ENCODE measurements at regions of chr2 and their contacts with region 1.

Region 1: DNA sequence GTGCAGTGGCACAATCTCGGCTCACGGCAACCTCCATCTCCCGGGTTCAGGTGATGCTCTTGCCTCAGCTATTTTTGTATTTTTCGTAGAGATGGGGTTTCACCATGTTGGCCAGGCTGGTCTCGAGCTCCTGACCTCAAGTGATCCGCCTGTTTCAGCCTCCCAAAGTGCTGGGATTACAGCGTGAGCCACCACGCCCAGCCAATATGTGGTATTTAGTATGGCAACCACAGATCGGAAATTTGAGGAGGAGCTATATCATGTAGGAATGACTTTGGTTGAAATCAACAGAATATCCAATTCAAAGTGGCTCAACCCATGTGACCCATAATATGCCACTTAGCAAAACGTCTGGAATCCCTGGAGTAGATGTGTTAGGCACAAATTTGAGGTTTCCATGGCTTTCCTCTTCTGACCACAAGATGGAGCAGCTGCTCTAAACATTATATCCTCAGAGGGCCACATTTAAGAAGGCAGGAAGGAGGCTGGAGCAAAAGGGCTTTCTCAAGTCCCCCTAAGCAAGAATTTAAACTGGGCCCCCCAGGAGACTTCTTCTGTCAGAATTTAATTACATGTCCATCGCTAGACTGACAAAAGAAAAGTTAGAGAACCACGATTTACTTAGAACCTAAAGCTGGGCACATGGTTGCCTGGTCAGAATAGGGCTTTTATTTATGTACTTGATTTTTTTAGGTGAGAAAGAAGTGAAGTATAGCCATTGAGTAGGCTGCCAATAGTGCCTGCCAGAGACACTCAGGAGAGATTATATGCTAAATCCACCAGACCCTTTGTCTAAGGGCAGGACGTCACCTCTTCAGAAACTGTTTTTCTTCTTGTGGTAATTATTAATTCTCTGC is 49.6 kb upstream of the ITSN2 start:
- DNase-seq: peak; percentile 68
- H3K4me3 ChIP-seq: no peak overlapping the region
- H3K27ac ChIP-seq: no peak overlapping the region
- H3K4me1 ChIP-seq: no peaks in the 10 kb centered on the region
- H3K27me3 ChIP-seq: no peaks in the 10 kb centered on the region
- CTCF ChIP-seq: peak; percentile 69 to 74
- POLR2A ChIP-seq: no peak

Region 2: GRCh38 chr2:24421668-24422067 is 11.7 kb after region 1 on chr2:
- CTCF ChIA-PET with region 1: interaction called, 30 read pairs
- POLR2A ChIA-PET with region 1: no interaction called
- dilution Hi-C with region 1: no loop called
- intact Hi-C with region 1: no loop called
- DNase-seq: peak; percentile 62
- H3K4me3 ChIP-seq: no peak overlapping the region
- H3K27ac ChIP-seq: no peak overlapping the region
- H3K4me1 ChIP-seq: no peaks in the 10 kb centered on the region
- H3K27me3 ChIP-seq: peaks cover 3 to 5% of the 10 kb centered on the region in 2 experiments
- CTCF ChIP-seq: peak; percentile 48 to 63
- POLR2A ChIP-seq: no peak

Region 3: GRCh38 chr2:24543252-24543651 is 133.3 kb after region 1 on chr2:
- CTCF ChIA-PET with region 1: interaction called, 4 read pairs
- POLR2A ChIA-PET with region 1: no interaction called
- dilution Hi-C with region 1: no loop called
- intact Hi-C with region 1: loop called (anchors 5 kb)
- DNase-seq: no peak
- H3K4me3 ChIP-seq: no peak overlapping the region
- H3K27ac ChIP-seq: no peak overlapping the region
- H3K4me1 ChIP-seq: no peaks in the 10 kb centered on the region
- H3K27me3 ChIP-seq: no peaks in the 10 kb centered on the region
- CTCF ChIP-seq: peak; percentile 15 to 29
- POLR2A ChIP-seq: no peak

Region 4: DNA sequence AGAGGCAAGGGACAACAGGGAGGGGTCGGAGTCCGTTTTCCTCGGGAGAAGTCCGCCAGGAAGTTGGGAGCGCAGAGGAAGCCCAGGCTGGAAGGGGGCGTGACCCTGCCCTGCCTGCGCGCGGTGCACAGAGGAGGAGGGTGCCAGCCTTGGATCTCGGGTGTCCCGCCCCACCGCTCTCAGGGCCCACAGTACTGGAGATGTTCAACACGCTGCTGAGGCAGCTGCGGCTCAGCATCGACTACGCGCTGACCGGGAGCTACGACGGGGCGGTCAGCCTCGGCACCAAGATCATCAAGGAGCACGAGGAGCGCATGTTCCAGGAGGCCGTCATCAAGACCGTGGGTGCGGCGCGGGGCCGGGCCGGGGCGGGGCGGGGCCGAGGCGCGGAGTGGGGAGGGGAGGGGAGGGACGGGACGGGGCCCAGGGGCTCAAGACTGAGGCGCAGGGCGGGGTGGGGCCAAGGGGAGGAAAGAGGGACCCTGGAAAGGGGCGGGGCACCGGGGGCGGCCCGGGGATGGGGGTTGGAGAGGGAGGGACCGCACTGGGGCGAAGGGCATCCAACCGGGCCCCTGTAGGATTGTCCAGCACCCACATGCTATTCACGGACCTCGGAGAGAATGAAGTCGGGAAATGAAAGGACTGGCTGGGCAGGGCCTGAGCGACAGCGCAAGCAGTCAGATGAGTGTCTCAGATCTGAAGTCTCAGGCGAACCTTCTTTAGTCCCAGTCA is 721.8 kb after region 1 on chr2:
- CTCF ChIA-PET with region 1: interaction called, 14 read pairs
- POLR2A ChIA-PET with region 1: no interaction called
- dilution Hi-C with region 1: no loop called
- intact Hi-C with region 1: loop called (anchors 2 kb)
- DNase-seq: no peak
- H3K4me3 ChIP-seq: no peak overlapping the region
- H3K27ac ChIP-seq: no peak overlapping the region
- H3K4me1 ChIP-seq: peaks cover 4% of the 10 kb centered on the region
- H3K27me3 ChIP-seq: peaks cover 7 to 24% of the 10 kb centered on the region in 2 experiments
- CTCF ChIP-seq: no peak
- POLR2A ChIP-seq: no peak

Region 5: GRCh38 chr2:25228848-25229278 is 818.9 kb after region 1 on chr2:
- CTCF ChIA-PET with region 1: interaction called, 14 read pairs
- POLR2A ChIA-PET with region 1: no interaction called
- dilution Hi-C with region 1: no loop called
- intact Hi-C with region 1: no loop called
- DNase-seq: peak; percentile 72
- H3K4me3 ChIP-seq: no peak overlapping the region
- H3K27ac ChIP-seq: no peak overlapping the region
- H3K4me1 ChIP-seq: no peaks in the 10 kb centered on the region
- H3K27me3 ChIP-seq: no peaks in the 10 kb centered on the region
- CTCF ChIP-seq: peak; percentile 68 to 85
- POLR2A ChIP-seq: no peak